Aorta (tissue), 5 donors: ENCODE measurements at regions of chr7 and their contacts with region 1.

Region 1: GRCh38 chr7:55415173-55415778 is 50.1 kb downstream of the LANCL2 start:
- DNase-seq: peak; percentile 84 to 91
- ATAC-seq: peak; percentile 89
- H3K4me3 ChIP-seq: no peak overlapping the region
- H3K27ac ChIP-seq: no peak overlapping the region
- H3K4me1 ChIP-seq: no peaks in the 10 kb centered on the region
- H3K27me3 ChIP-seq: no peaks in the 10 kb centered on the region

Region 2: GRCh38 chr7:54773472-54774399 is 641.5 kb before region 1 on chr7:
- intact Hi-C with region 1: loop called in 1 of 2 experiments (anchors 10 kb)
- DNase-seq: peak; percentile 79 to 93
- ATAC-seq: peak; percentile 94
- H3K4me3 ChIP-seq: peak overlapping the region in 1 of 2 donors; percentile 64
- H3K27ac ChIP-seq: no peak overlapping the region
- H3K4me1 ChIP-seq: no peaks in the 10 kb centered on the region
- H3K27me3 ChIP-seq: no peaks in the 10 kb centered on the region

Region 3: GRCh38 chr7:55280031-55280454 is 135.2 kb before region 1 on chr7:
- intact Hi-C with region 1: loop called (anchors 1 to 2 kb)
- DNase-seq: peak in 1 of 2 donors; percentile 58
- ATAC-seq: peak; percentile 81
- H3K4me3 ChIP-seq: no peak overlapping the region
- H3K27ac ChIP-seq: no peak overlapping the region
- H3K4me1 ChIP-seq: no peaks in the 10 kb centered on the region
- H3K27me3 ChIP-seq: no peaks in the 10 kb centered on the region